ENCODE measurements at regions of chr22 and their contacts with region 1.

Region 1: DNA sequence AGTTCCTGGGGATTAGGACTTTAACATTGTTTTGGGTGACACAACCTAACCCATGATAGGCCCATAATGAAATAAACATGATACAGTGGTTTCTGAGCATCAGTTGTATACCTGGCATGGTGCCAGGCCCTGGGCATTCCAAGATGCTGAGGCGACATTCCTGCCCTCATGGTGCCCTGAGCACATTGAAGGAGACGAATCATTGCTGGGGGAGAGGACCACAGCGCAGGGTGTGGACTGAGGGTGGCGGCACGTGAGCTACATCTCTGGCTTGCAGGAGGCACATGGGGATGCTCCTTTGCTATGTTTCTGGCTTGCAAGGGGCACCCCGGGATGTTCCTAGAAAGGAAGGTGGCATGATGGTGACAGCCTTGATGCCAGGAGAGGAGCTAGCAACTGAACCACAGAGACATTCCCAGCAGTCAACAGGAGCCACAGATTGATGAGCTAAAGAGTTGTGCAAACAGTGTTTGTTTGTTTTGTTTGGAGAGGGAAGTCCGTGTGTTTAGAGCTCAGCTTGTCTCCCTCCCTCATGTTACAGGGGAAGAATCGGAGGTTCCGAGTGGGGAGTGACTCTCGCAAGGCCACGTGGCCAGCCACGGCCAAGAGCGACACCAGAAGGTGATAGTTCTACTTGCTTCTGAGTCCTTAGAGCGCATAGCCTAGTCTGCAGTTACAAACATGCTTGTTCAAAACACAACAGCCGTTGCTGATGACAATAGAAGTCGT is 106.4 kb downstream of the MIAT start:
- DNase-seq: peak; percentile 56
- ATAC-seq: peak; percentile 87
- H3K4me3 ChIP-seq: no peak overlapping the region
- H3K27ac ChIP-seq: no peak overlapping the region
- H3K4me1 ChIP-seq: peaks cover 10% of the 10 kb centered on the region
- H3K27me3 ChIP-seq: no peaks in the 10 kb centered on the region
- CTCF ChIP-seq: peak; percentile 36

Region 2: GRCh38 chr22:26679003-26679629 is 84.7 kb before region 1 on chr22:
- CTCF ChIA-PET with region 1: no interaction called
- POLR2A ChIA-PET with region 1: no interaction called
- intact Hi-C with region 1: loop called (anchors 5 kb)
- DNase-seq: peak; percentile 76
- ATAC-seq: peak; percentile 70
- H3K4me3 ChIP-seq: no peak overlapping the region
- H3K27ac ChIP-seq: no peak overlapping the region
- H3K4me1 ChIP-seq: peaks cover 2% of the 10 kb centered on the region
- H3K27me3 ChIP-seq: no peaks in the 10 kb centered on the region
- CTCF ChIP-seq: peak; percentile 79

Region 3: DNA sequence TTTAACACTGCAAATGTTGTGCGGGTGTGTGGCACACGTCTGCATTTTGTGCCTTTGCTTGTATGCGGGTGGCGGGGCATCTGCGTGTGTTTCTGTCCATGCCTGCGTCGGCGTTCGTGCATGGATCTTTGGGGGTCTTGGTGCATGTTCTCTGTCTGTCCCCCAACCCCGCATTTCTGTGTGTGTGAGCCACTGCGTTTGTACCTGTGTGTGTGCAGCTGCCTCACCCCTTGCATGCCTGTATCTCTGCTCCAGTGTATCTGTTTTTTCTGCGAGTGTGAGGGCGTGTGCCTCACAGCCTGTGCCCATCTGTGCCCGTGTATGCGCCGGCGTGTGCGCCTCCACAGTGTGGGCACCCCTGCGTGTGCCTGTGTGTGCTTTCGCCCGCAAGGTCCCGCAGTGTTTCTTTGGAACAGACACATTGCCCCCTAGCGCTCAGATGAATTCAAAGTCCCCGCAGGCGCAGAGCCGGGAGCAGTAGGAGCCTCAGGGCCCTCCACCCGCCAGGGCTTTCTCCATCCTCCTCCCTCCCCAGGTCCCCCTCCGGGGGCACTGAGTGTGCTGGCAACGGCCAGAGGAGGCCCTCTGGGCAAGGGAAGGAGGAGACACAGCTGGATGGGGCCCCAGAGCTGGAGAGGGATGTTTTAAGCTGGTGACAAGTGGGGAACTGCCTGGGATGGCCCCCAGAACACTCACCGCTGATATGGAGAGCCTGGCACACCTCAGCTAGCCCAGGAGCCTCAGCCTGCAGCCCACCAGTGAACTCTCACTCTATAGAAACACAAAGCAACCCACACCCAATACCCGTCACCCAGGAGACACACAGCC is 1040.9 kb after region 1 on chr22:
- CTCF ChIA-PET with region 1: no interaction called
- POLR2A ChIA-PET with region 1: no interaction called
- intact Hi-C with region 1: loop called (anchors 5 kb)
- DNase-seq: peak; percentile 66
- ATAC-seq: peak; percentile 81
- H3K4me3 ChIP-seq: no peak overlapping the region
- H3K27ac ChIP-seq: no peak overlapping the region
- H3K4me1 ChIP-seq: peaks cover 9% of the 10 kb centered on the region
- H3K27me3 ChIP-seq: peaks cover 10% of the 10 kb centered on the region
- CTCF ChIP-seq: peak; percentile 74